ENCODE measurements at regions of chr1 and their contacts with region 1.

Region 1: DNA sequence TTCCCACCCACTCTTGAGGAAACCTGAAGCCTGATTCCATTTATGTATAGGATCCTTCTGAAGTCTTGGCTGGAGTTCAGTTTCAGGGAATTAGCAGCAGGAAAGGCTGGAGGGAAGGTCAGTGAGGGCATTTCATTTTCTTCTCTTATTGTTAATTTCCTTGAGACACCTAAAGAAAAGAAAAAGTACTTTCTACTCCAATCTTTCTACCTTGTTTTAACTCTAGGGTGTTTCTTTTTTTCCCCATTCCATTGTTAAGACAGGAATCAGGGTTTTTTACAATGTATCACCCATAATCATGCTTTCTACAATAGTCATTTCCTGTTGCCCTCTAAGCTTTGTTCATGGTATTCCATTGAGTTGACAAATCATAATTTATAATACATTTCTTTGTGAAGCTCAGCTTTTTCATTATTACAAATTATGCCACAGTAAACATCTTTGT is 27.4 kb downstream of the SNRPE start:
- DNase-seq: no peak
- ATAC-seq: no peak
- H3K4me3 ChIP-seq: no peak overlapping the region
- H3K27ac ChIP-seq: no peak overlapping the region
- H3K4me1 ChIP-seq: peaks cover 0 to 9% (median 0%) of the 10 kb centered on the region in 12 donors
- H3K27me3 ChIP-seq: no peaks in the 10 kb centered on the region
- CTCF ChIP-seq: no peak
- POLR2A ChIP-seq: no peak

Region 2: GRCh38 chr1:203968728-203969127 is 79.9 kb after region 1 on chr1:
- intact Hi-C with region 1: loop called in 1 of 10 experiments (anchors 10 kb)
- DNase-seq: peak in 4 of 5 donors; percentile 36 to 51 (median 46)
- ATAC-seq: peak in 3 of 4 donors; percentile 47 to 81 (median 59)
- H3K4me3 ChIP-seq: no peak overlapping the region
- H3K27ac ChIP-seq: no peak overlapping the region
- H3K4me1 ChIP-seq: peaks cover 0 to 9% (median 0%) of the 10 kb centered on the region in 12 donors
- H3K27me3 ChIP-seq: no peaks in the 10 kb centered on the region
- CTCF ChIP-seq: no peak
- POLR2A ChIP-seq: no peak